ENCODE measurements at regions of chr1 and their contacts with region 1.

Region 1: GRCh38 chr1:108691942-108692723 is at the start of gene PRPF38B:
- DNase-seq: peak; percentile 86 to 94 (median 93)
- ATAC-seq: peak; percentile 91
- H3K4me3 ChIP-seq: peak within 1 kb of the TSS; percentile 80
- H3K4me3 Mint-ChIP-seq: peak within 1 kb of the TSS; percentile 91 to 100 (median 97)
- H3K27ac ChIP-seq: peak within 1 kb of the TSS; percentile 90
- H3K27ac Mint-ChIP-seq: peak within 1 kb of the TSS; percentile 90 to 100 (median 98)
- H3K4me1 ChIP-seq: peaks cover 14 to 34% of the 10 kb centered on the region in 2 donors
- H3K4me1 Mint-ChIP-seq: peaks cover 24 to 52% (median 41%) of the 10 kb centered on the region in 7 donors
- H3K27me3 ChIP-seq: no peaks in the 10 kb centered on the region
- H3K27me3 Mint-ChIP-seq: peaks cover 0 to 10% (median 0%) of the 10 kb centered on the region in 5 donors
- total RNA-seq, gene PRPF38B: 85.5 to 136 (median 118) TPM

Region 2: DNA sequence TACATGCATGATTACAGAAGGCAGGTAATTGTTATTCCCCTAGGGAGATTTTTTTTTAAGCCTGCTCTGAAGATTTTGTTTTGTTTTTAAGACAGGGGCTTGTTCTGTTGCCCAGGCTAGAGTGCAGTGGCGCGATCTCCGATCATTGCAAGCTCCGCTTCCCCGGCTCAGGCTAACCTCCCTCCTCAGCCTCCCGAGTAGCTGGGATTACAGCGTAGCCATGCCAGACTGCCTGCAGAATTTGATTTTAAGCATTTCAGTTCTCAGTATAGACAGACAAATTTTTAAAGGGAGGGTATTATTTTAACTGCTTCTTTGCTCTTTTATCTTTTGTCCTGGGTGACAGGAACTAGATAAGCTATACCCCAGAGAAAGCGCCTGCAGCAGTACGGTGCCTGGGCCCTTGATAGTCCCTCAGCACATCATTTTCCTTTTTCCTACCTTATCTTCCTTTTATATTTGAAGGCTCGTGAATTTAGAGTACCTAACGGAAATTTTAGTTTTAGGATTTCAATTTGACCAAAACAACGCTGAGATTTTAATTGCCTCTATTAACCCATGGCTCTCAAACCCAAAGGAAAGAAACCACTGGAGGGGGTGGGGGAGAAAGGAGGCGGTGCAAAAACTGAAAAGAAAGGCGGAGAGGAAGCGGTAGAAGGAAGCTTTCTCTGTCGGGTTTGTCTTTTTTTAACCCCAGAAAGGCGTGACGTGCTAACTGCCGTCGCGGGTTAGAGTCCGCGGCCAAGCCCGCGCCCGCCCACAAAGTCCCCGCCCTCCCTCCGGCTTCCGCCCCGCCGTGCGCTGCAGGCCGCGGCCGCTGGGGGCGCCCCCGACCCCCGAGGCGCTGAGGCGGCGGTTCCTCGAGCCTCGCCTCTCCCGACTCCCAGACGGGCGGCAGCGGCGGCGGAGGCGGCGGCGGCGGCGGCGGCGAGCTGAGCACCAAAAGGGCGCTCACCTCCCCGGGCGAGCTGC is 132.6 kb before region 1 on chr1 and contains the start of gene EEIG2:
- CTCF ChIA-PET with region 1: interaction called, 17 read pairs
- POLR2A ChIA-PET with region 1: interaction called, 32 read pairs
- intact Hi-C with region 1: loop called (anchors 1 kb)
- DNase-seq: peak; percentile 84 to 94 (median 91)
- ATAC-seq: peak; percentile 94
- H3K4me3 ChIP-seq: peak within 1 kb of the TSS; percentile 65
- H3K4me3 Mint-ChIP-seq: peak within 1 kb of the TSS in 9 of 10 donors; percentile 93 to 99 (median 96)
- H3K27ac ChIP-seq: peak within 1 kb of the TSS; percentile 68
- H3K27ac Mint-ChIP-seq: peak within 1 kb of the TSS; percentile 84 to 96 (median 91)
- H3K4me1 ChIP-seq: peaks cover 21 to 31% of the 10 kb centered on the region in 2 donors
- H3K4me1 Mint-ChIP-seq: peaks cover 22 to 38% (median 33%) of the 10 kb centered on the region in 7 donors
- H3K27me3 ChIP-seq: no peaks in the 10 kb centered on the region
- H3K27me3 Mint-ChIP-seq: peaks cover 0 to 10% (median 0%) of the 10 kb centered on the region in 5 donors
- total RNA-seq, gene EEIG2: 7.8 to 15.9 (median 10.9) TPM

Region 3: DNA sequence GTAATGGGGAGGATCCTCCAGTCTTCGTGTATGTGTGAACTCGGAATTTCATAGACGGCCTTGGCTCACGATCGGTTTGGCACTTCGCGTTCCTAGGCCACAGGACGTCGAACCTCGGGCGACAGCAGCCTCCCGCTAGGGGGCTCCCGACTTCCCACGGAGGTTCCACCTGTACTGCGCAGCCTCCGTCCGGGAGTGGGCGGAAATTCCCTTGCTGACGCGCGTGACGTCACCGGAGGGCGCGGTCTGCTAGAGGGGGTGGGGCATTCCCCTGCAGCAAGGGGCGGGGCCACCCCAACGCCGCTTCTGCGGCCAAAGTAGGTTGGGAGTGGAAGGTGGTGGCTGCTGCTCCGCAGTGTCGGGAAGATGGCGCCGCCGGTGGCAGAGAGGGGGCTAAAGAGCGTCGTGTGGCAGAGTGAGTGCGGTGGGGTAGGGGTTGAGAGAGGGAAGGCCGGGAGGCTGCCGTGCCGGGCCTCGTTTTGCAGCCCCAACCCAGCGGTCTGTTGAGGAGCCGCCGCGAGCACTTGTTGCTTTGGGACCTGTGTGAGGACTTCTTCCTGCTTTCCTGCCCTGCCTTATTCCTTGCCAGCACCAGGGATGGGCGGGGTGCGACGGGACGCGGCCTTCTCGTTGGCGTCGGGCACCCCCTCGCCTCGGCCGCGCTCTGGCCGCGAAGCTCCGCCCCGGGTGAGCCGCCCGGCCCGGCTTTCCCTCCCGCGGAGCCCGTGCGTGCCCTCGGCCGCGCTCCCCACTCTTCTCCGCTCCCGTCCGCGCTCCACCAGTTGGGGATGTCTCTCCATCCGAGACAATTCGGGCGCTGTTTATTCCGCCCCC is 54.5 kb after region 1 on chr1 and contains the start of gene STXBP3:
- CTCF ChIA-PET with region 1: interaction called, 6 read pairs
- POLR2A ChIA-PET with region 1: interaction called, 14 read pairs
- intact Hi-C with region 1: loop called (anchors 1 kb)
- DNase-seq: peak; percentile 98 to 100 (median 99)
- ATAC-seq: peak; percentile 97
- H3K4me3 ChIP-seq: peak within 1 kb of the TSS; percentile 76
- H3K4me3 Mint-ChIP-seq: peak within 1 kb of the TSS; percentile 90 to 100 (median 97)
- H3K27ac ChIP-seq: peak within 1 kb of the TSS; percentile 98
- H3K27ac Mint-ChIP-seq: peak within 1 kb of the TSS; percentile 93 to 100 (median 98)
- H3K4me1 ChIP-seq: peaks cover 3 to 6% of the 10 kb centered on the region in 2 donors
- H3K4me1 Mint-ChIP-seq: peaks cover 26 to 47% (median 41%) of the 10 kb centered on the region in 7 donors
- H3K27me3 ChIP-seq: no peaks in the 10 kb centered on the region
- H3K27me3 Mint-ChIP-seq: peaks cover 0 to 5% (median 0%) of the 10 kb centered on the region in 5 donors
- total RNA-seq, gene STXBP3: 46.8 to 75.2 (median 54.0) TPM

Region 4: DNA sequence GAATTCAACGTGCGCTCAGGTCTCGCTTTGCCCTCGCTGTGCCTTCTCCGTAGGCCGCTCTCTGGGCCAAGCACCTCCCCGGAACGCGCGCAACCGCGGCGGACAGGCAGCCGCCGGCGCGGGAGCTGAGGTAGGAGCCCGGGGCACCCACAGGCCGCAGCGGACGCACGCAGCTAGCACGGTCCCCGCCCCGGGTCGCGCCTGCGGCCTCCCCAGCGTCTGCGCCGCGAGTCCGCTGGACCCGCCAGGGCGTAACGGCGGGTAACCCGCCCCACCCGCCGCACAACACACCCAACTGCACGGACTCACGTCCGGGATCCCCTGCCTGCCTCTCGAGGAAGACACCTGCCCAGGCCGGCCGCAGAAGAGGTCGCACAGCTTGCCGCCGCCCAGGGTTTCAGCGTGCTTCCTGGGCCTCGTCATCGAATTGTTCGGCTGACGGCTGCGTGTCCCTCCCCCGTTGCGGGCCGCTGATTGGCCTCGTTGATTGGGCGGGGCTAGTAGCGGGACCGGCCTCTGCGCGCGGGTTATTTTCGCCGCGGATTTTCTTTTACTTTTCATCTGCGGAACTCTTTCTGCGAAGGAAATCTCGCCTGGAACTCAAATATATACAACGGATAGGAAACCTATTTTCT is 271.0 kb after region 1 on chr1 and contains the start of gene CLCC1:
- CTCF ChIA-PET with region 1: no interaction called
- POLR2A ChIA-PET with region 1: interaction called, 7 read pairs
- intact Hi-C with region 1: loop called (anchors 1 to 5 kb)
- DNase-seq: peak; percentile 78 to 92 (median 89)
- ATAC-seq: peak; percentile 97
- H3K4me3 ChIP-seq: peak within 1 kb of the TSS; percentile 76
- H3K4me3 Mint-ChIP-seq: peak within 1 kb of the TSS; percentile 87 to 94 (median 90)
- H3K27ac ChIP-seq: peak within 1 kb of the TSS; percentile 85
- H3K27ac Mint-ChIP-seq: peak within 1 kb of the TSS; percentile 78 to 97 (median 92)
- H3K4me1 ChIP-seq: peaks cover 11 to 16% of the 10 kb centered on the region in 2 donors
- H3K4me1 Mint-ChIP-seq: peaks cover 21 to 48% (median 37%) of the 10 kb centered on the region in 7 donors
- H3K27me3 ChIP-seq: no peaks in the 10 kb centered on the region
- H3K27me3 Mint-ChIP-seq: peaks cover 0 to 15% (median 0%) of the 10 kb centered on the region in 5 donors
- total RNA-seq, gene CLCC1: 15.4 to 34.6 (median 25.2) TPM

Region 5: DNA sequence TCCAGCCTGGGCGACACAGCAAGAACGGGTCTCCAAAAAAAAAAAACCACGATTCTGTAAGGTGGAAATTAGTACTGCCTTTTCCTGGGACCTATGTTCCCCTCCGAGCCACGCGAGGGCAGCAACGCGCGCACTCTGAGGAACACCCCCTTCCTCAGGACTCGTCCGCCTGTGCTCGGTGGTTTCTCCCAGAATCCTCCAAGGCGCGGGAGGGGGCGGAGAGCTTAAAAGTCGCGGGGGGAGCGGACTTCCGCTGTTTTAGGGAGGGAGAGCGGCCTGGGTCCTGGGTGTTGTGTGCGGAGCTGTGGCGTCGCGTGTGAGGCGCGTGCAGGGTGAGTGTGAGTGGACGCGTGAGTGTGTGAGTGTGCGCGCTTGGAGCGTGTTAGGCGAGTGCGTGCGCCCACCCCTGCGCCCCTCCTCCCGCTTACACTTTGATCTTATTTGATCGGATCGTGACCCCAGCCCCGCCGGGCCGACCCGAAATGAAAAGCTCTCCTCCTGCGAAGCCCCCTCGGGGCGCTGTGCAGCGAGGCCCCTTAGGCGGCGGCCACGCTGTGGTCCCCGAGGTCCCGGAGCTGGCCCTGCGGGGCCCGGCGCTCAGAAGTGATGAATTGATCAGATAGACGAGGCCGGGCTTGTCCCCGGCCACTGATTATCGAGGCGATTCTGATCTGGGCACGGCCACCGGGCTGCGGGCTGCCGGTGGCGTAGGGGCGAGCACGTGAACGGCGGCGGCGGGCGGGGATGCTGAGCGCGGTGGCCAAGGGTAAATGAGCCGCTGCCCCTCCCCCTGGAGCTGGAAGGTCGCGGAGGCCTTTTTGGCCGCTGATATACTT is 408.0 kb after region 1 on chr1:
- CTCF ChIA-PET with region 1: interaction called, 3 read pairs
- POLR2A ChIA-PET with region 1: interaction called, 19 read pairs
- intact Hi-C with region 1: loop called in 1 of 2 experiments (anchors 1 kb)
- DNase-seq: peak; percentile 90 to 98 (median 97)
- ATAC-seq: peak; percentile 98
- H3K4me3 ChIP-seq: peak overlapping the region; percentile 80
- H3K4me3 Mint-ChIP-seq: peak overlapping the region; percentile 93 to 99 (median 98)
- H3K27ac ChIP-seq: peak overlapping the region; percentile 88
- H3K27ac Mint-ChIP-seq: peak overlapping the region; percentile 92 to 99 (median 96)
- H3K4me1 ChIP-seq: peaks cover 0 to 5% of the 10 kb centered on the region in 2 donors
- H3K4me1 Mint-ChIP-seq: peaks cover 5 to 22% (median 13%) of the 10 kb centered on the region in 7 donors
- H3K27me3 ChIP-seq: no peaks in the 10 kb centered on the region
- H3K27me3 Mint-ChIP-seq: peaks cover 0 to 2% (median 0%) of the 10 kb centered on the region in 5 donors

Region 6: GRCh38 chr1:109397538-109398342 is 705.6 kb after region 1 on chr1 and contains the start of gene SORT1:
- CTCF ChIA-PET with region 1: no interaction called
- POLR2A ChIA-PET with region 1: no interaction called
- intact Hi-C with region 1: loop called in 1 of 2 experiments (anchors 1 kb)
- DNase-seq: peak; percentile 29 to 67 (median 43)
- ATAC-seq: peak; percentile 94
- H3K4me3 ChIP-seq: peak within 1 kb of the TSS; percentile 37
- H3K4me3 Mint-ChIP-seq: peak within 1 kb of the TSS; percentile 80 to 90 (median 86)
- H3K27ac ChIP-seq: no peak within 1 kb of the TSS
- H3K27ac Mint-ChIP-seq: peak within 1 kb of the TSS in 2 of 9 donors; percentile 43 to 74
- H3K4me1 ChIP-seq: peaks cover 0 to 6% of the 10 kb centered on the region in 2 donors
- H3K4me1 Mint-ChIP-seq: peaks cover 0 to 30% (median 16%) of the 10 kb centered on the region in 7 donors
- H3K27me3 ChIP-seq: peaks cover 0 to 18% of the 10 kb centered on the region in 2 donors
- H3K27me3 Mint-ChIP-seq: peaks cover 36 to 51% (median 41%) of the 10 kb centered on the region in 5 donors
- total RNA-seq, gene SORT1: 1.0 to 25.6 (median 1.8) TPM

Measured in naive thymus-derived CD4-positive, alpha-beta T cell (primary cell).